ENCODE measurements at regions of chr13 and their contacts with region 1.

Region 1: DNA sequence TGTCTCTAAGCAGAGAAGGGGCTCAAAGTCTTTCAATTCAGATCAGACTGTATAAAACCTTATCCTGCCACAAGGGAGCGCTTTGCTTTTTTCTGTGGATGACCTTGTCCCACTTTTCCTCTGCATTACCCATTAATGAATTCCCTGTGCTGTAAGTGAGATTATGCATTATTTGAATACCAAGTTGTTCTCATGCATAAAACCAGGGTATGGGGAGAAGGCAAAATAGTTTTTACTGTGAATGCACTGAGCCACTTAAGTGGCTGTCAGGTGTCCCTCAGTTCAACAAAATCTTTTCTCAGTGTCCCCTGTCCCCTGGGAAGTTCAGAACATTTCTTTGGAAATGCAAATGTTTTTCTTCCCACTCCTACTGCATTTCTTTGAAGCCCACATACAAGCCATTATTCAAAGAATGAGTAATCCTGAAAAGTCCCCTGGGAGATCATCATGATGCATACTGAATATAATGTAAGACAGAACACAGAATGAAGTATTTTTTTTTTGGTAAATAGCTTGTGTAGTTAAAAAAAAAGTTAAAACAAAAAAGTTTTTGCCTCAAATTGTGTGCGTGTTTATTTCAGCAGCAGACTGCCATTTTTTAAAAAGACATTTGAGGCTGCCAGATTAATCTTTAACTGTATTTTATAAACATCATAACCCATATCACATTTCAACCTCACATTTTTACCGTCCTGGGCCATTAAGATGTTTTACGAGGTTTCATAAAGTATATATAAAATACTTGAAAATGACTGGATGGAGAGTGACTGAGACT is 506.7 kb upstream of the PCDH9 start:
- DNase-seq: peak; percentile 68
- ATAC-seq: peak; percentile 63; the same call in 1 of the 2 replicates
- H3K4me3 ChIP-seq: no peak overlapping the region
- H3K27ac ChIP-seq: no peak overlapping the region
- H3K4me1 ChIP-seq: no peaks in the 10 kb centered on the region
- H3K27me3 ChIP-seq: no peaks in the 10 kb centered on the region
- CTCF ChIP-seq: peak; percentile 24; the same call in 1 of the 2 replicates
- POLR2A ChIP-seq: no peak
- RAD21 ChIP-seq: no peak

Region 2: GRCh38 chr13:67283637-67284036 is 453.2 kb before region 1 on chr13:
- CTCF ChIA-PET with region 1: no interaction called
- POLR2A ChIA-PET with region 1: no interaction called
- dilution Hi-C with region 1: no loop called
- in situ Hi-C with region 1: no loop called
- intact Hi-C with region 1: loop called (anchors 10 kb)
- DNase-seq: peak; percentile 13
- ATAC-seq: no peak
- H3K4me3 ChIP-seq: no peak overlapping the region
- H3K27ac ChIP-seq: no peak overlapping the region
- H3K4me1 ChIP-seq: peaks cover 3% of the 10 kb centered on the region; the same call in 1 of the 2 replicates
- H3K27me3 ChIP-seq: no peaks in the 10 kb centered on the region
- CTCF ChIP-seq: no peak
- POLR2A ChIP-seq: no peak
- RAD21 ChIP-seq: no peak

Region 3: GRCh38 chr13:67696775-67697174 is 40.1 kb before region 1 on chr13:
- CTCF ChIA-PET with region 1: no interaction called
- POLR2A ChIA-PET with region 1: no interaction called
- dilution Hi-C with region 1: no loop called
- in situ Hi-C with region 1: no loop called
- intact Hi-C with region 1: no loop called
- DNase-seq: no peak
- ATAC-seq: no peak
- H3K4me3 ChIP-seq: no peak overlapping the region
- H3K27ac ChIP-seq: no peak overlapping the region
- H3K4me1 ChIP-seq: no peaks in the 10 kb centered on the region
- H3K27me3 ChIP-seq: no peaks in the 10 kb centered on the region
- CTCF ChIP-seq: no peak
- POLR2A ChIP-seq: no peak
- RAD21 ChIP-seq: no peak

Region 4: DNA sequence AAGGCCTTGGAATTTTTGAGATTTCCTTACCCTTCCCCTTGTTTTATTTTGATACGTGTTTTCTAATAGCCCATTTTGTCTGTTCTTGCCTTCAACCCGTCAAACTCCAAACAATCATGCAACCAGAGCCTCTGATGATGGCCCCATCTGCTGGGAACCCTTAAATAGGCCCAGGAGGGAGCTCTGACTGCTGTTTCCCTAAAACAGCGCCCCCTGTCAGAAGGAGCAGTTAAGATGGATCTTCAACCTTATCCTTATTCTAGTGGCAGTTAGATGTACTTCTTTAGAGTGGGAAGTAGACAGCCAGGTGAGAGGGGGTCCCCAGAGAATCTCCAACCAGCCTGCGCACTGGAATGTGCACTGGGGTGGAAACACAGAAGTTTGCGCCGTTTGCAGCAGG is 524.3 kb after region 1 on chr13:
- CTCF ChIA-PET with region 1: no interaction called
- POLR2A ChIA-PET with region 1: no interaction called
- dilution Hi-C with region 1: no loop called
- in situ Hi-C with region 1: no loop called
- intact Hi-C with region 1: no loop called
- DNase-seq: no peak
- ATAC-seq: no peak
- H3K4me3 ChIP-seq: no peak overlapping the region
- H3K27ac ChIP-seq: no peak overlapping the region
- H3K4me1 ChIP-seq: no peaks in the 10 kb centered on the region
- H3K27me3 ChIP-seq: no peaks in the 10 kb centered on the region
- CTCF ChIP-seq: no peak
- POLR2A ChIP-seq: no peak
- RAD21 ChIP-seq: no peak